CD8-positive, alpha-beta T cell (primary cell): ENCODE measurements at regions of chr7 and their contacts with region 1.

Region 1: DNA sequence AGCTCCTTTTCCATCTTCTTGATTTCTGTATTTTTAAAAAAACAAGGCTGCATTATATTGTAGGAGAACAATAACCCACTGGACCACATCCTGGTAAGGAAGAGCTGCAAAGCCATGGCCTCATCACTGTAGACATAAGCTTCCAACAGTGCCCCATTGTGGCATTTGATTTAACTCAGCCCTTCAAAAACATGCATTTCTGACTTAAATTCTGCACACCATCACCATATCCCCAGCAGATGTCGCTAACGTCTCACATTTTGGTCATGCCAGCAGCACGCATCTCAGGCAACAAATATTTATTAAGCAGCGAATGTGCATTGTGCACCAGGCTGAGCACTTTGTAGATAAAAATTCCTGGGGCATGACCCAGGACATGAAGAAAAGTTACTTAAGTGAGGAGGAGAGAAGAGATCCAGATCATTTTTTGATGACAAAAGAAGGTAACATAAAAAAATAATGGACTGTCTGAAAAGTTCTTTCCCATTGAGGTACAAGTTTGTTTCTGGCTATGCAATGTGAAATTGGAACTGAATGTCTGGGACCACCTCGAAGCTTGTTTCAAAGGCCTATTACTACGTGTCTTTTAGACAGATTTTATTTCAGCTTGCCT is 164.6 kb upstream of the CDCA7L start:
- DNase-seq: peak; percentile 33 to 84 (median 58)
- ATAC-seq: peak; percentile 75
- H3K4me3 ChIP-seq: no peak overlapping the region
- H3K4me3 Mint-ChIP-seq: no peak overlapping the region
- H3K27ac ChIP-seq: no peak overlapping the region
- H3K27ac Mint-ChIP-seq: no peak overlapping the region
- H3K4me1 ChIP-seq: no peaks in the 10 kb centered on the region
- H3K4me1 Mint-ChIP-seq: no peaks in the 10 kb centered on the region
- H3K27me3 ChIP-seq: no peaks in the 10 kb centered on the region
- H3K27me3 Mint-ChIP-seq: no peaks in the 10 kb centered on the region
- CTCF ChIP-seq: peak; percentile 81

Region 2: DNA sequence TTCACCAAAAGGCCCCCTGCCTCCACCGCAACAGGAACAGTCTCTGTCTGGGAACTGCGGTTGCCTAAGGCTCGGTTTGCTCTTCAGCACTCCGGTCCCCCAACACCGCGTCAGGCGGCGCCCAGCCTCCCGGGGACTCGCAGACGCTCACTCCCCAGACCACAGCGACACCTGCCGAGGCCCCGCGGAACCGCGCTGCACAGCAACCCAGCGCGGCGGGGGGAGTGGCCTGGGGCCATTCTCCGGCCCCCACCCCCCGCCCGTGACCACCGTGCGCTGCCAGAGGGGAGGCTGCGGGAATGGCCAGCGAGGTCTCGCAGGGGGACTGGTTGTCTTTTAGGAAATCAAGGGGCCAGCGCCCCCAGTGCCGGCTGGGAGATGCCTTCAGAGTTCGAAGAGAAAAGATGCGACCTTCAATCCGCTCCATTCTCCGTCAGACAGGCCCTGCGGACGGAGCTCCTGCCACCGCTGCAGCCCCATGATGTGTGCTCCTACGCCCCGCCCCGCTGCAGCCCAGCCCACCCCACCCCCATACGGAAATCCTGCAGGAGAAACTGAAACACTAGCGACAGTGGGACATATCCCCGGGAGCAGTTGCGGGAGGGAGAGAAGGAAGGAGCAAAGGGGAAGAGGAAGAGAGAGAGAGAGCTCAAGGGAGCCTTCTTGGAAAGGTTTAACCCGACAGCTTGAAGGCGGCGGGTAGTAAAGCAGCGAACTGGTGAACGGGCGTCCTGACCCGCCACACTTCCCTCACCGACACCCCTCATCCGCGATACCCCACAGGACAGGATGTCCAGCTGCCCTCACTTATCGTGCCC is 27.2 kb before region 1 on chr7:
- CTCF ChIA-PET with region 1: interaction called, 10 read pairs
- POLR2A ChIA-PET with region 1: no interaction called
- intact Hi-C with region 1: no loop called
- DNase-seq: peak; percentile 65 to 88 (median 81)
- ATAC-seq: peak; percentile 97
- H3K4me3 ChIP-seq: peak overlapping the region; percentile 47 to 61
- H3K4me3 Mint-ChIP-seq: peak overlapping the region; percentile 85
- H3K27ac ChIP-seq: peak overlapping the region in 1 of 2 experiments; percentile 57
- H3K27ac Mint-ChIP-seq: peak overlapping the region; percentile 82
- H3K4me1 ChIP-seq: peaks cover 7% of the 10 kb centered on the region
- H3K4me1 Mint-ChIP-seq: peaks cover 13% of the 10 kb centered on the region
- H3K27me3 ChIP-seq: peaks cover 0 to 5% of the 10 kb centered on the region in 2 experiments
- H3K27me3 Mint-ChIP-seq: peaks cover 18% of the 10 kb centered on the region
- CTCF ChIP-seq: peak; percentile 93

Region 3: GRCh38 chr7:22438994-22439393 is 328.7 kb after region 1 on chr7:
- CTCF ChIA-PET with region 1: interaction called, 11 read pairs
- POLR2A ChIA-PET with region 1: no interaction called
- intact Hi-C with region 1: no loop called
- DNase-seq: no peak
- ATAC-seq: no peak
- H3K4me3 ChIP-seq: no peak overlapping the region
- H3K4me3 Mint-ChIP-seq: no peak overlapping the region
- H3K27ac ChIP-seq: no peak overlapping the region
- H3K27ac Mint-ChIP-seq: no peak overlapping the region
- H3K4me1 ChIP-seq: no peaks in the 10 kb centered on the region
- H3K4me1 Mint-ChIP-seq: peaks cover 2% of the 10 kb centered on the region
- H3K27me3 ChIP-seq: no peaks in the 10 kb centered on the region
- H3K27me3 Mint-ChIP-seq: peaks cover 5% of the 10 kb centered on the region
- CTCF ChIP-seq: no peak

Region 4: DNA sequence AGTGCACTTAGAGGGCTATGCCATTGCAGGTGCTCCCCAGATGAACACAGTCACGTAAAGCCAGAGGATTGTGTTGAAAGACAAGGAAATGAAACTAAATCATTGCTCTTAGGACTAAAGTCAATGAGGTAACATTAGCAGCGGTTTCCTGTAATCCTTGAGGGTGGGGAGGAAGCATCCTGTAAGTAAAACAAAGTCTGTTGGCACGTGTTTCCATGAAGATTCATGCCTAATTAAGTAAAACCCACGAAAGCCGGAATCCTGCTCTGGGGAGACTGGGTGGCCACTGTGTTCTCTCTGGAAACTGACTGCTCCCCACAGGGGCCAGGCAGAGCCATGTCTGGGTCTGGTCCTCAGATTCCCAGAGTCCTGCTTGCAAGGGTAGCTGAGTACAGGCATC is 371.4 kb after region 1 on chr7:
- CTCF ChIA-PET with region 1: interaction called, 19 read pairs
- POLR2A ChIA-PET with region 1: no interaction called
- intact Hi-C with region 1: no loop called
- DNase-seq: peak in 1 of 9 experiments; percentile 6
- ATAC-seq: no peak
- H3K4me3 ChIP-seq: no peak overlapping the region
- H3K4me3 Mint-ChIP-seq: no peak overlapping the region
- H3K27ac ChIP-seq: no peak overlapping the region
- H3K27ac Mint-ChIP-seq: no peak overlapping the region
- H3K4me1 ChIP-seq: peaks cover 3% of the 10 kb centered on the region
- H3K4me1 Mint-ChIP-seq: peaks cover 4% of the 10 kb centered on the region
- H3K27me3 ChIP-seq: no peaks in the 10 kb centered on the region
- H3K27me3 Mint-ChIP-seq: no peaks in the 10 kb centered on the region
- CTCF ChIP-seq: no peak

Region 5: GRCh38 chr7:22488643-22489462 is 378.5 kb after region 1 on chr7:
- CTCF ChIA-PET with region 1: interaction called, 29 read pairs
- POLR2A ChIA-PET with region 1: no interaction called
- intact Hi-C with region 1: loop called (anchors 1 kb)
- DNase-seq: peak; percentile 26 to 74 (median 55)
- ATAC-seq: peak; percentile 46
- H3K4me3 ChIP-seq: no peak overlapping the region
- H3K4me3 Mint-ChIP-seq: no peak overlapping the region
- H3K27ac ChIP-seq: no peak overlapping the region
- H3K27ac Mint-ChIP-seq: no peak overlapping the region
- H3K4me1 ChIP-seq: no peaks in the 10 kb centered on the region
- H3K4me1 Mint-ChIP-seq: no peaks in the 10 kb centered on the region
- H3K27me3 ChIP-seq: no peaks in the 10 kb centered on the region
- H3K27me3 Mint-ChIP-seq: peaks cover 9% of the 10 kb centered on the region
- CTCF ChIP-seq: peak; percentile 83

Region 6: DNA sequence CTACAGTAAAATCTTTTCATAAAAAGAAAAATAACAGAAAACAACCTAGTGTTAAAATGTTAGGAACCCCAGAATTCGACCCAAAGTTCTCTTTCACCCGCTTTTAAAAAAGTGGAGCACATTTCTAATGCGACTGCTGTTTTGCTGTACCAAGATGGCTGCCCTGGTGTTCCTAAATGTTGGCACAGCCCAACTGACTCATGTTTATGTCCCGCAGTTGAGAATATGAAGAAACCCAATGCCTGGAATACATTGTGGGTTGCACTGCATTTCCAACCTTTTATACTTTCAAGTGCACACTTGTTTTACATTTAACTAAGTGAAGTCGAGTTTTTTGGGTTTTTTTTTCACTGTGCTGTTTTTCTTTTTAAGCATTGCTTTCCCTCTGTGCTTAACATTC is 388.7 kb after region 1 on chr7:
- CTCF ChIA-PET with region 1: interaction called, 9 read pairs
- POLR2A ChIA-PET with region 1: no interaction called
- intact Hi-C with region 1: loop called in 1 of 2 experiments (anchors 1 kb)
- DNase-seq: no peak
- ATAC-seq: no peak
- H3K4me3 ChIP-seq: no peak overlapping the region
- H3K4me3 Mint-ChIP-seq: no peak overlapping the region
- H3K27ac ChIP-seq: no peak overlapping the region
- H3K27ac Mint-ChIP-seq: no peak overlapping the region
- H3K4me1 ChIP-seq: peaks cover 6% of the 10 kb centered on the region
- H3K4me1 Mint-ChIP-seq: peaks cover 3% of the 10 kb centered on the region
- H3K27me3 ChIP-seq: no peaks in the 10 kb centered on the region
- H3K27me3 Mint-ChIP-seq: peaks cover 16% of the 10 kb centered on the region
- CTCF ChIP-seq: no peak

Region 7: DNA sequence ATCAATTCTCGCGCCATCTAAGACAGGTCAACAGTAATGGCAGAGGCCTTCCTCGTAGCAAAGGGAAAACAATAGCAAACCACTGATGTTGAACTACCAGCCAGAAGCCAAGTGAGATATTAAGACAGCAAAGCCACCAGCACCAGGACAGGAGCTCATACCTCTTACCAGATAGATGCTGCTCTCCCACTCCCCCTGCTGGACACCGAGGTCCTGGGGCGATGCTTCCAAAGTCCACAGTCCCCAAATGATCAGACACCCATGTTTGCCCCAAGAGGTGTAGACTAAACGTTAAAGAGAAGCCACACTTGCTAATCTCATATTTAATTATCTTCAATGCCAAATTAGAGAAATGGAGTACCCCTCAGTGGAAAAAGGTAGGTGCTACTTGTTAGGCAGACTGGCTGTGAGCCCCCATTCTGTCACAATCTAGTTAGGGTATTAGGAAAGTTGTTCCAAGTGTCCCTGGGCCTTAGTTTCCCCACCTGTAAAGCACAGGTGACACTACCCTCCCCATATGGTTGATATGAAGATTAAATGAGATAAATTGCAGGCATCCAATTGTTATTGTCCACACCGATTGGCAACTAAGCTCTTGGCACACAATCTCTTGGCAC is 672.4 kb after region 1 on chr7:
- CTCF ChIA-PET with region 1: no interaction called
- POLR2A ChIA-PET with region 1: no interaction called
- intact Hi-C with region 1: loop called in 1 of 2 experiments (anchors 10 kb)
- DNase-seq: peak; percentile 45 to 75 (median 65)
- ATAC-seq: peak; percentile 67
- H3K4me3 ChIP-seq: no peak overlapping the region
- H3K4me3 Mint-ChIP-seq: no peak overlapping the region
- H3K27ac ChIP-seq: no peak overlapping the region
- H3K27ac Mint-ChIP-seq: no peak overlapping the region
- H3K4me1 ChIP-seq: no peaks in the 10 kb centered on the region
- H3K4me1 Mint-ChIP-seq: no peaks in the 10 kb centered on the region
- H3K27me3 ChIP-seq: no peaks in the 10 kb centered on the region
- H3K27me3 Mint-ChIP-seq: peaks cover 7% of the 10 kb centered on the region
- CTCF ChIP-seq: peak; percentile 75